A673 (cell line): ENCODE measurements at regions of chr18 and their contacts with region 1.

Region 1: DNA sequence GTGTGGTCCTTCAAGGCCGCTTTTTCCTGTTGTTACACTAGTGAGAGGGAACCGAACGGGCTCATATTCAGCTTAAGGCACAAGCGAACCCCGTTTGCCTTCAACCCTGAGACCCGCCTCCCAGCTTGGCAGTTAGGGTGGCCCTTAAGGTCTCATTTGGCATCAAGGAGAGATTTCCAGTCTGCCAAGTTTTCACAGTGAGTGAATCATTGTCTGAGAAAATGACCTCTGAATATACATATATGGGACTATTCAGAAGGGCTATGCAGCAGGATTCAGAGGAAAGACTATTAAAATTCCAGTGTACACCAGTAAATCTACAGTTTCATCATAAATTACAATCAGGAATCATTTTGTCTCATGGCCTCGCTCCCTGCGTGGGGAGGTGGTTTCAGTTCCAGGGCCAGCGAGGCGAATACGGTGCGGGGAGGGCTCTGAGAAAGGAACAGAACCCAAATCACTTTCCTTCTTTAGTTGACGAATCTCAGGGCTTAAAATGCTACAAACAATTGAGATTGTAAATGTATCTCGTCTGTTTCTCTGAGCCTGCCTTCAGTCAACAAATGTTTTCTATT is 231.4 kb downstream of the FAM210A start:
- DNase-seq: no peak
- H3K4me3 ChIP-seq: no peak overlapping the region
- H3K27ac ChIP-seq: no peak overlapping the region
- H3K4me1 ChIP-seq: no peaks in the 10 kb centered on the region
- H3K27me3 ChIP-seq: no peaks in the 10 kb centered on the region
- CTCF ChIP-seq: no peak

Region 2: DNA sequence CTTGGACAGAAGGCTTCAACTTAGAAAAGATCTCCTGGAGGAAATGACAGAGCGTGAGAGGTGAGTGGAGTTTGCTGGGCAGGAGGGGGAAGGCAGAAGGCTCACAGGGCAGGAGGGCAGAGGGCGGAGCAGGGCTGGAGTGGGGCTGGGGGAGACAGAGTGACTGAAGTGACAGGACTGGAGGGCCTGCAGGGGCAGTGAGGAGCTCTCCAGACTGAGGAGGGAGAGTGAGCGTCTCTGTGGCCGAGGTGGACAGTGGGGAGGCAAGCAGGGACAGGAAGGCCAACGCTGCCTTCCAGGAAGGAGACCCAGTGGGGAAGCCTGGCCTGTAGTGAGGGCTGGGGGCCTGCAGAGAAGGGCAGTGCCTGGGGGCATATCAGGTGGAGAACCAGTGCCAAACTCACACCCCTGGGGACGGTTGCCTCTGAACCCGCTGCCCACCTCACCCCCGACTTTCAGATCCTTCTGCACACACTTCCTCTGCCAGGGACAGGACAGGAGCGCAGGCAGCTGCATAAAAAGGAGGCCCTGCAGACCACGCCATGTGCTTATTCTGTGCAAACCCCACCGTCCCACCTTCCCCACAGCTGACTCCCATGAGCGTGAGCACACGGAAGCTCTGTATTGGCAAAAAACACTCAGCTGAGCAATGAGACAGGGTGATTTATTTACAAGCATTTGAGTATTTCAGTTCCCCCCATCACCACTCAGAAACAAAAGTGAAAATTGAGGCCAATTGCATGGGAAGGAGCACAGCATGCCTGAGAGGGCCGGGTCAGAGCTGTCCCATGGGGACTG is 12.9 kb before region 1 on chr18:
- CTCF ChIA-PET with region 1: no interaction called
- POLR2A ChIA-PET with region 1: no interaction called
- intact Hi-C with region 1: loop called (anchors 2 kb)
- DNase-seq: no peak
- H3K4me3 ChIP-seq: no peak overlapping the region
- H3K27ac ChIP-seq: no peak overlapping the region
- H3K4me1 ChIP-seq: no peaks in the 10 kb centered on the region
- H3K27me3 ChIP-seq: no peaks in the 10 kb centered on the region
- CTCF ChIP-seq: no peak